GM12878 (cell line): ENCODE measurements at regions of chr6 and their contacts with region 1.

Region 1: GRCh38 chr6:31366693-31367470 is 9.9 kb upstream of the HLA-B start:
- DNase-seq: peak; percentile 58
- ATAC-seq: peak; percentile 100
- H3K4me3 ChIP-seq: peak overlapping the region; percentile 73
- H3K27ac ChIP-seq: no peak overlapping the region
- H3K4me1 ChIP-seq: peaks cover 6% of the 10 kb centered on the region
- H3K27me3 ChIP-seq: no peaks in the 10 kb centered on the region; a peak in 1 of 4 replicates
- CTCF ChIP-seq: peak; percentile 90 to 95 (median 94)
- EP300 ChIP-seq: no peak
- POLR2A ChIP-seq: no peak
- RAD21 ChIP-seq: peak; percentile 92

Region 2: DNA sequence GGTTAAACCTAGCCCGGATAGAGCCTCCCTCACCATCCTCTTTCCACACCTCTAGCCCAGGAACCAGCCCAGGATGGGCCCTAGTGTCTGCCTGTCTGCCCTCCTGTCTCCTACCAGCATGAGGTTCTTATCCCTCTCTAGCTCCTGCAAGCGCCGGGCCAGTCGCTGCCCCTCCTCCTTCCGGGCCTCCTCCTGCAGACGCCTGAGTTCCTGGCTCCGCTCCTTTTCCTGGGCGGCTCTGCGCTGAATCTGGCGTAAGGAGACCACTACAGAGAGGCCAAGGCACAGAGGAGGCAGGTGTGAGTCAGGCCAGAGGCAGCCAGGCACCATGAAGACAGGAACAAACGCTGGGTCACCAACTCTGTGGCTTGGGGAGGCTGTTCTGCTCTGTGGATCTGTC is 223.7 kb before region 1 on chr6:
- CTCF ChIA-PET with region 1: interaction called, 29 read pairs
- POLR2A ChIA-PET with region 1: no interaction called
- RAD21 ChIA-PET with region 1: interaction called, 4 read pairs
- SMC1A ChIA-PET with region 1: interaction called, 22 read pairs
- in situ Hi-C with region 1: loop called (anchors 5 kb)
- intact Hi-C with region 1: no loop called
- DNase-seq: no peak
- ATAC-seq: no peak
- H3K4me3 ChIP-seq: no peak overlapping the region
- H3K27ac ChIP-seq: no peak overlapping the region
- H3K4me1 ChIP-seq: peaks cover under 1% of the 10 kb centered on the region; the same call in 1 of the 2 replicates
- H3K27me3 ChIP-seq: no peaks in the 10 kb centered on the region
- CTCF ChIP-seq: no peak
- EP300 ChIP-seq: no peak
- POLR2A ChIP-seq: no peak
- RAD21 ChIP-seq: no peak

Region 3: DNA sequence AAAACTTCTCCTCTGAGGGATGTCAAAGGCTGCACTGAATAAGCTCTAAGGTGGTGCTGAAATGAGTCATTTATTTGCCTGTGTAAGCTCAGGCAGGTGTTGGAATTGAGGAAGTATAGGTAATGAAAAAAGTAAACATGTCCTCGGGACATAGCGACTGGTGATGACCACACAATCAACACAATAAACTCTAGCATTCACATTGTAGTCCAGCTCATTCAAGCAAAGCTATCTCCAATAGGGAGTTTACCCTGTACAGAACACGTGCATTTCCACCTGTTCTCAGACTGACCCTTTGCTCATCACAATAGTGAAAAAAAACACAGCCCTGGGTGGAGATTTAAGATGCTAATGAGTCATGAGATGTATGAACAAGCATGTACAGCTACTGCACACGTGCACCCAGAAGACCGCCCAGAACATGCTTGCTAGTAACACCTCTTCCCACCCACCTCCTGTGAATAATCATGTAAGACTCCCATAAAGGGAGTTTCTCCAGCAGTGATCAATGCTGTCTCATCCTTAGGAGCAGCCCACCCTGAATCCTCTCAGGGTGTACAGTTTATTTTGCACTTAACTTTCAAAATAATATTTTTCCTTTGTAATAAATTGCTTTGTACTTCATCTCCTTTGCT is 163.4 kb before region 1 on chr6:
- CTCF ChIA-PET with region 1: interaction called, 69 read pairs
- POLR2A ChIA-PET with region 1: interaction called, 4 read pairs
- RAD21 ChIA-PET with region 1: interaction called, 84 read pairs
- SMC1A ChIA-PET with region 1: interaction called, 5 read pairs
- in situ Hi-C with region 1: loop called (anchors 5 kb)
- intact Hi-C with region 1: no loop called
- DNase-seq: peak; percentile 86
- ATAC-seq: peak; percentile 79
- H3K4me3 ChIP-seq: peak overlapping the region; percentile 67
- H3K27ac ChIP-seq: peak overlapping the region; percentile 84
- H3K4me1 ChIP-seq: peaks cover 25% of the 10 kb centered on the region
- H3K27me3 ChIP-seq: no peaks in the 10 kb centered on the region
- CTCF ChIP-seq: no peak
- EP300 ChIP-seq: peak; percentile 85 to 86
- POLR2A ChIP-seq: no peak
- RAD21 ChIP-seq: no peak

Region 4: GRCh38 chr6:31345026-31345730 is 21.7 kb before region 1 on chr6:
- CTCF ChIA-PET with region 1: interaction called, 20 read pairs
- POLR2A ChIA-PET with region 1: no interaction called
- RAD21 ChIA-PET with region 1: interaction called, 4 read pairs
- SMC1A ChIA-PET with region 1: interaction called, 6 read pairs
- in situ Hi-C with region 1: no loop called
- intact Hi-C with region 1: no loop called
- DNase-seq: no peak
- ATAC-seq: 0 out of 3 replicates have a peak, but pooled peaks have one; percentile 28
- H3K4me3 ChIP-seq: no peak overlapping the region
- H3K27ac ChIP-seq: no peak overlapping the region
- H3K4me1 ChIP-seq: no peaks in the 10 kb centered on the region
- H3K27me3 ChIP-seq: no peaks in the 10 kb centered on the region
- CTCF ChIP-seq: no peak
- EP300 ChIP-seq: no peak
- POLR2A ChIP-seq: no peak
- RAD21 ChIP-seq: no peak

Region 5: GRCh38 chr6:31383149-31383548 is 16.3 kb after region 1 on chr6:
- CTCF ChIA-PET with region 1: interaction called, 4 read pairs
- POLR2A ChIA-PET with region 1: interaction called, 3 read pairs
- RAD21 ChIA-PET with region 1: interaction called, 10 read pairs
- SMC1A ChIA-PET with region 1: interaction called, 4 read pairs
- in situ Hi-C with region 1: no loop called
- intact Hi-C with region 1: no loop called
- DNase-seq: no peak
- ATAC-seq: no peak
- H3K4me3 ChIP-seq: no peak overlapping the region
- H3K27ac ChIP-seq: no peak overlapping the region
- H3K4me1 ChIP-seq: no peaks in the 10 kb centered on the region
- H3K27me3 ChIP-seq: 0 out of 4 replicates have a peak, but pooled peaks cover 0 to 3% of the 10 kb centered on the region in 2 experiments
- CTCF ChIP-seq: no peak
- EP300 ChIP-seq: no peak
- POLR2A ChIP-seq: no peak
- RAD21 ChIP-seq: no peak